ENCODE measurements at regions of chr12 and their contacts with region 1.

Region 1: GRCh38 chr12:130031571-130032189 is 127.9 kb upstream of the TMEM132D start:
- DNase-seq: peak; percentile 7
- H3K4me3 ChIP-seq: no peak overlapping the region
- H3K27ac ChIP-seq: no peak overlapping the region
- H3K4me1 ChIP-seq: no peaks in the 10 kb centered on the region
- H3K27me3 ChIP-seq: no peaks in the 10 kb centered on the region
- CTCF ChIP-seq: peak; percentile 75 to 76
- POLR2A ChIP-seq: no peak

Region 2: GRCh38 chr12:128259556-128260070 is 1772.1 kb before region 1 on chr12:
- CTCF ChIA-PET with region 1: interaction called, 3 read pairs
- POLR2A ChIA-PET with region 1: no interaction called
- dilution Hi-C with region 1: no loop called
- intact Hi-C with region 1: loop called (anchors 5 kb)
- DNase-seq: peak; percentile 2
- H3K4me3 ChIP-seq: no peak overlapping the region
- H3K27ac ChIP-seq: no peak overlapping the region
- H3K4me1 ChIP-seq: no peaks in the 10 kb centered on the region
- H3K27me3 ChIP-seq: no peaks in the 10 kb centered on the region
- CTCF ChIP-seq: peak; percentile 13 to 15
- POLR2A ChIP-seq: no peak

Region 3: DNA sequence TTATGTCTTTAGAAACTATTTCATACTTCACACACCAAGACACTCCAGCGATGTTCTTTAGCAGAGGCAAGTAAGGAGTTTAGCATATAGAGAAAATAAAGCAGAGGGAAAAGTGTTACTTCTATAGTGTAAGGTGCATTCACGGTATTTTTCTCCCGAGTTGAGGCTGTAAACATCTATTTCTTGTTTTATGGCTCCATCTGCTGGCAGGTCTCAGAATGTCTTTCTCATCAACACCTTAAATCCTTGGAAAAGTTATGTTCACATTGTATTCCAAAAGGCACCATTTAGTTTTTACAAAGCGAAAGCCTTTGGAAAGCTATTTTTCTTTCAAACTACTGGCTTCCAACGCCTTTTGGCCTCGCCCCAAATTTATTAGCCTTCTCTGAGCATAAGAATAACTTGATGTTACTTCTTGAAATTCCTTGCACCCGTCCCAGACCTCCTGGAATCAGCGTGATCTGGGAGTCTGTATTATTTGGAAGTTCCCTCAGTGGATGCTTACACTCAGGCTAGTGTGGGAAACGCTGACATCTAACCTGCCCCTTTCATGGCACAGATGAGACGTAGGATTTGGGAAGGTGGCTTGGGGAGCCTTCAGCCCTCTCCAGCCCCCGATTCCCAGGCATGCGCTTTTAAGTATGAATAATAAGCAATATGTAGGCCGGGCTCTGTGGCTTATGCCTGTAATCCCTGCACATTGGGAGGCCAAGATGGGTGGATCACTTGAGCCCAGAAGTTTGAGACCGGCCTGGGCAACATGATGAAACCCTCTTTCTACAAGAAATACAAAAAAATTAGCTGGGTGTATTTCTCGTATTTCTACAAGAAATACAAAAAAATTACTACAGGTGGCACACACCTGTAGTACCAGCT is 304.1 kb after region 1 on chr12:
- CTCF ChIA-PET with region 1: interaction called, 4 read pairs
- POLR2A ChIA-PET with region 1: no interaction called
- dilution Hi-C with region 1: no loop called
- intact Hi-C with region 1: loop called (anchors 5 kb)
- DNase-seq: peak; percentile 46
- H3K4me3 ChIP-seq: no peak overlapping the region
- H3K27ac ChIP-seq: no peak overlapping the region
- H3K4me1 ChIP-seq: no peaks in the 10 kb centered on the region
- H3K27me3 ChIP-seq: no peaks in the 10 kb centered on the region
- CTCF ChIP-seq: peak; percentile 24 to 34
- POLR2A ChIP-seq: no peak

Region 4: GRCh38 chr12:130440411-130441080 is 408.9 kb after region 1 on chr12:
- CTCF ChIA-PET with region 1: no interaction called
- POLR2A ChIA-PET with region 1: no interaction called
- dilution Hi-C with region 1: no loop called
- intact Hi-C with region 1: loop called (anchors 5 kb)
- DNase-seq: no peak
- H3K4me3 ChIP-seq: no peak overlapping the region
- H3K27ac ChIP-seq: no peak overlapping the region
- H3K4me1 ChIP-seq: no peaks in the 10 kb centered on the region
- H3K27me3 ChIP-seq: no peaks in the 10 kb centered on the region
- CTCF ChIP-seq: no peak
- POLR2A ChIP-seq: no peak

Measured in endothelial cell of umbilical vein (primary cell).